ENCODE measurements at regions of chr1 and their contacts with region 1.

Region 1: DNA sequence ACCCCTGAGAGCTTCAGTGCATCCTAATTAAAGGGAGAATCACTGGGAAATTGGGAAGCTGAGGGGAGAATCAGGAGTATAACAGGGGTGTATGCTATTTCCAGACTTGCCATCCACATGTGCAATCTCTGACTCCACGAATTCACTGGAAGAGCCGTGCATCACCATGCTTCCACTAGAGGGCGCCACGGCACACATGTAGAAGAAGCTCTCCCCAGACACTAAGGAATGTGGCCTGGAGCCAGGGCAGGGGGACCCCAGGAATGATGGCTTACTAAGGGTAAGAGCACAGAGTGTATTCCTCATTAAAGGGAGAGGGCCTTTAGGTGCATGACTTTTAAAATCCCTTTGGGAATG is 81.5 kb downstream of the ABCA4 start:
- DNase-seq: peak; percentile 43 to 69
- ATAC-seq: peak; percentile 67 to 87; a peak in 3 of 6 replicates
- H3K4me3 ChIP-seq: no peak overlapping the region
- H3K27ac ChIP-seq: peak overlapping the region; percentile 9 to 33; a peak in 1 of 6 replicates
- H3K4me1 ChIP-seq: no peaks in the 10 kb centered on the region
- CTCF ChIP-seq: peak; percentile 71
- EP300 ChIP-seq: no peak
- POLR2A ChIP-seq: no peak
- RAD21 ChIP-seq: peak; percentile 53 to 60; a peak in 4 of 5 replicates

Region 2: GRCh38 chr1:94055459-94056122 is 16.1 kb after region 1 on chr1:
- CTCF ChIA-PET with region 1: interaction called, 89 read pairs
- POLR2A ChIA-PET with region 1: no interaction called
- DNase-seq: no peak
- ATAC-seq: no peak
- H3K4me3 ChIP-seq: no peak overlapping the region
- H3K27ac ChIP-seq: no peak overlapping the region
- H3K4me1 ChIP-seq: peaks cover 10% of the 10 kb centered on the region
- CTCF ChIP-seq: no peak
- EP300 ChIP-seq: no peak
- POLR2A ChIP-seq: no peak
- RAD21 ChIP-seq: no peak

Region 3: DNA sequence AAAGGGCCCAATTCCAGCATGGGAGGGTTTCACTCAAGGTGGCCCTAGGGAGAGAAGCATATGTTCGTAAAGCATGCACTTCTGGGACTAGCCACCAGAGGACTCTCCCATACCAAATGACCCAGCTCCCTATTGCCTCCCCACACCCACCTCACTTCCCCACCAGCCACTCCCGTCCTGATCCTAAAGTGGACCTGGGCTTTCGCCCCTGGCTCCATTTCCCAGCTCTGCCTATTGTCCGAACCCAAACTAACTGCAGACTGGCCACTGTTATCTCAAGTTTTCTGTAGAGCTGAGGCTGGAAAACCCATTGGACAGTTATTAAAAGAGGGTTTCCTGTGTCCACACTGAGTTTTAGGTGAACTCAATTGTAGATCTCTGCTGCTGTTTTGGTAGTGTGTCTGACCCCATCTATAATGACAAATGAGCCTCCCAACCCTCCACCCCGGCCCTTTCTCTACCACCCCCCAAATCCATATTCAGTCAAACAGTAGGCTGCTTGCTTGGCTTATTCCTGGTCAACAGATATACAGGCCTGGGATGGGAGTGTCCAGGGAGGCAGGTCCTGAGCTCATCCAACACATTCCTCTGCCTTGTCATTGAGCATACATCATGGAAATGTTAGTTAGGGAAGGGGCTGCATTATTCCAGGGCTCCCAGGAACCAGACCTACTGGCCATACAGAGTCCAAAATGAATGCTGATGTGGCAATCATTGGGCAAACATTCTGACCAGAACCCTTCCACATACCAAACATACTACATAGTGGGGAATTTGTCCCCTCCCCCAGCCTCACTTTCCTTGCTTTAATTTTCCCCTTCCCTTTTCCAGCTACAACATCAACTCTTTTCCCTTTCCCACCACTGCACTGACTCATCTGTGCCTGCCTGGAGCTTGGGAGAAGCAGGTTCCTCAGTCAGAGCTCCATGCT is 22.3 kb after region 1 on chr1:
- CTCF ChIA-PET with region 1: interaction called, 89 read pairs
- POLR2A ChIA-PET with region 1: no interaction called
- DNase-seq: peak; percentile 67 to 87
- ATAC-seq: peak; percentile 93 to 97
- H3K4me3 ChIP-seq: no peak overlapping the region
- H3K27ac ChIP-seq: peak overlapping the region; percentile 72 to 78
- H3K4me1 ChIP-seq: peaks cover 21% of the 10 kb centered on the region
- CTCF ChIP-seq: peak; percentile 76
- EP300 ChIP-seq: no peak
- POLR2A ChIP-seq: no peak
- RAD21 ChIP-seq: peak; percentile 91 to 93

Region 4: GRCh38 chr1:94125551-94126514 is 86.3 kb after region 1 on chr1:
- CTCF ChIA-PET with region 1: no interaction called
- POLR2A ChIA-PET with region 1: no interaction called
- DNase-seq: peak in 1 of 2 experiments; percentile 56
- ATAC-seq: peak in 1 of 2 experiments; percentile 59; a peak in 3 of 6 replicates
- H3K4me3 ChIP-seq: no peak overlapping the region
- H3K27ac ChIP-seq: peak overlapping the region in 1 of 2 experiments; percentile 49; a peak in 2 of 6 replicates
- H3K4me1 ChIP-seq: peaks cover 8% of the 10 kb centered on the region
- CTCF ChIP-seq: no peak
- EP300 ChIP-seq: no peak
- POLR2A ChIP-seq: no peak
- RAD21 ChIP-seq: no peak

Region 5: GRCh38 chr1:94463765-94464330 is 424.4 kb after region 1 on chr1:
- CTCF ChIA-PET with region 1: interaction called, 51 read pairs
- POLR2A ChIA-PET with region 1: no interaction called
- DNase-seq: peak; percentile 14 to 66
- ATAC-seq: peak; percentile 89 to 92
- H3K4me3 ChIP-seq: no peak overlapping the region
- H3K27ac ChIP-seq: peak overlapping the region in 1 of 2 experiments; percentile 40; a peak in 1 of 6 replicates
- H3K4me1 ChIP-seq: peaks cover 10% of the 10 kb centered on the region
- CTCF ChIP-seq: peak; percentile 81
- EP300 ChIP-seq: no peak
- POLR2A ChIP-seq: no peak
- RAD21 ChIP-seq: peak; percentile 86 to 92

Measured in A549 (cell line).